Activated naive CD4-positive, alpha-beta T cell treated with anti-CD3 and anti-CD28 coated beads, Interleukin-2, amount 10 ng/mL, durations not matched to agents 7 days and 5 days (primary cell): ENCODE measurements at regions of chr1 and their contacts with region 1.

Region 1: GRCh38 chr1:92817986-92818764 is 13.7 kb upstream of the RPL5 start:
- DNase-seq: peak; percentile 38
- H3K4me3 Mint-ChIP-seq: no peak overlapping the region
- H3K27ac Mint-ChIP-seq: no peak overlapping the region
- H3K4me1 Mint-ChIP-seq: no peaks in the 10 kb centered on the region
- H3K27me3 Mint-ChIP-seq: peaks cover 45% of the 10 kb centered on the region

Region 2: GRCh38 chr1:92502247-92502646 is 315.9 kb before region 1 on chr1:
- CTCF ChIA-PET with region 1: no interaction called
- DNase-seq: no peak
- H3K4me3 Mint-ChIP-seq: no peak overlapping the region
- H3K27ac Mint-ChIP-seq: peak overlapping the region; percentile 8
- H3K4me1 Mint-ChIP-seq: peaks cover 31% of the 10 kb centered on the region
- H3K27me3 Mint-ChIP-seq: no peaks in the 10 kb centered on the region

Region 3: GRCh38 chr1:92749024-92749634 is 69.0 kb before region 1 on chr1:
- CTCF ChIA-PET with region 1: interaction called, 78 read pairs
- DNase-seq: peak; percentile 56
- H3K4me3 Mint-ChIP-seq: no peak overlapping the region
- H3K27ac Mint-ChIP-seq: no peak overlapping the region
- H3K4me1 Mint-ChIP-seq: no peaks in the 10 kb centered on the region
- H3K27me3 Mint-ChIP-seq: peaks cover 3% of the 10 kb centered on the region

Region 4: DNA sequence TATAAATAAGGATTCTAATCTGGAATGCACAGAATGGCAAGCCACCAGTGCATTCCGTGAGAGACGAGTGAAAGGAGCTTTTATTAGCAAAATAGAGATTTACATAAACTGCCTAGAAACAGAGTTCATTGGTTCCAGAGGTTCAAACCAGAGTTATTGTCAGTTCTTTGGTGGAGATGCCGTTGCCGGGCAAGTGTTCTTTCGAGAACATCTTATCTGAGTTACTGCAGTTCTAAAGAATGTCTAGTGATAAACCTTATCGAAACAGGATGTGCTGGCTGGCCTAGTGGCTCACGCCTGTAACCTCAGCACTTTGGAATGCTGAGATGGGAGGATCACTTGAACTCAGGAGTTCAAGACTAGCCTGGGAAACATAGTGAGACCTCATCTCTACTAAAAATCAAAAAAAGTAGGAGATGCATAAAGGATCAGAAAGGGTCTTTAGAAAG is 13.4 kb before region 1 on chr1:
- CTCF ChIA-PET with region 1: no interaction called
- DNase-seq: peak; percentile 22
- H3K4me3 Mint-ChIP-seq: no peak overlapping the region
- H3K27ac Mint-ChIP-seq: no peak overlapping the region
- H3K4me1 Mint-ChIP-seq: no peaks in the 10 kb centered on the region
- H3K27me3 Mint-ChIP-seq: peaks cover 26% of the 10 kb centered on the region

Region 5: DNA sequence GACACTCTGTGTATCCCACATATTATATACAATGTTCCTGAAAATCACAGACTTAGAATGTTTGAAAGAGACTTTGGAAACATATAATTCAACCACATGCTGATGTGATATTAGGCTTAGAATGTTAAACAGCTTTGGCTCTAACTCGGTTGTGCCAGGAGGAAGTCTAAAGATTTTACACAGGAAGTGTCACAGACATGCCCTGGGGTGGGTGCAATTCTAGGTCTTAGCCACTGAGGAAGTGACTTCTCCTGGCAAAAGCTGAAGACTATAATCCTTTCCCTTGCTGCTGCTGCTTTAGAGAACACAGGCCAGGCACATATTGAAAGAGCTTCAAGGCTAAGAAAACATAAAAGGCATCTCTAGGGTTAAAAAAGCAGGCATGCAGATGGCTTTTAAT is 64.6 kb after region 1 on chr1:
- CTCF ChIA-PET with region 1: no interaction called
- DNase-seq: peak; percentile 59
- H3K4me3 Mint-ChIP-seq: no peak overlapping the region
- H3K27ac Mint-ChIP-seq: peak overlapping the region; percentile 67
- H3K4me1 Mint-ChIP-seq: peaks cover 37% of the 10 kb centered on the region
- H3K27me3 Mint-ChIP-seq: no peaks in the 10 kb centered on the region